ENCODE measurements at regions of chr7 and their contacts with region 1.

Region 1: DNA sequence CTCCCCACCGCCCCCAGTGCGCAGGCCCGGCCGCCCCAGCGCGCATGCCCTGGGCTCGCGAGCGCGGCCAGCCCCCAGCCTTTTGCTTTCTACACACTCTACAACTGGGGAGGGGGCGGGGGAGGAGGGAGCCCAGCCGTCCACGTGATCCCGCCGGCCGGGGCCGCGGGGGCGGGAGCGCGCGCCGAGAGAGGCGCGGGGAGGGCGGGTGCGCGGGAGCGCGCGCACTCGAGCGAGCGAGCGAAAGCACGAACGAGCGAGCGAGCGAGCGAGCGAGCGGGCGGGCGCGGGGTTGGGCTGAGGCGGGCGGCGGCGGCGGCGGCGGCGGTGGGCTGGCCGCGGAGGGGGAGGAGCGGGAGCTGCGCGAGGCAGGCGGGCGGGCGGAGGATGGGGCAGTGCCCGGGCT is at the start of gene AUTS2:
- DNase-seq: peak; percentile 82 to 92 (median 90)
- H3K4me3 ChIP-seq: peak within 1 kb of the TSS; percentile 65 to 97 (median 87)
- H3K27ac ChIP-seq: peak within 1 kb of the TSS; percentile 77 to 99 (median 95)
- H3K27me3 ChIP-seq: no peaks in the 10 kb centered on the region
- CTCF ChIP-seq: peak in 1 of 56 donors; percentile 6
- total RNA-seq, gene AUTS2: 47.2 to 133 (median 80.3) TPM

Region 2: GRCh38 chr7:69109246-69109645 is 488.8 kb before region 1 on chr7:
- intact Hi-C with region 1: no loop called
- DNase-seq: peak in 1 of 10 donors; percentile 60
- H3K4me3 ChIP-seq: no peak overlapping the region
- H3K27ac ChIP-seq: no peak overlapping the region
- H3K27me3 ChIP-seq: peaks cover 0 to 13% (median 0%) of the 10 kb centered on the region in 45 donors
- CTCF ChIP-seq: no peak

Region 3: DNA sequence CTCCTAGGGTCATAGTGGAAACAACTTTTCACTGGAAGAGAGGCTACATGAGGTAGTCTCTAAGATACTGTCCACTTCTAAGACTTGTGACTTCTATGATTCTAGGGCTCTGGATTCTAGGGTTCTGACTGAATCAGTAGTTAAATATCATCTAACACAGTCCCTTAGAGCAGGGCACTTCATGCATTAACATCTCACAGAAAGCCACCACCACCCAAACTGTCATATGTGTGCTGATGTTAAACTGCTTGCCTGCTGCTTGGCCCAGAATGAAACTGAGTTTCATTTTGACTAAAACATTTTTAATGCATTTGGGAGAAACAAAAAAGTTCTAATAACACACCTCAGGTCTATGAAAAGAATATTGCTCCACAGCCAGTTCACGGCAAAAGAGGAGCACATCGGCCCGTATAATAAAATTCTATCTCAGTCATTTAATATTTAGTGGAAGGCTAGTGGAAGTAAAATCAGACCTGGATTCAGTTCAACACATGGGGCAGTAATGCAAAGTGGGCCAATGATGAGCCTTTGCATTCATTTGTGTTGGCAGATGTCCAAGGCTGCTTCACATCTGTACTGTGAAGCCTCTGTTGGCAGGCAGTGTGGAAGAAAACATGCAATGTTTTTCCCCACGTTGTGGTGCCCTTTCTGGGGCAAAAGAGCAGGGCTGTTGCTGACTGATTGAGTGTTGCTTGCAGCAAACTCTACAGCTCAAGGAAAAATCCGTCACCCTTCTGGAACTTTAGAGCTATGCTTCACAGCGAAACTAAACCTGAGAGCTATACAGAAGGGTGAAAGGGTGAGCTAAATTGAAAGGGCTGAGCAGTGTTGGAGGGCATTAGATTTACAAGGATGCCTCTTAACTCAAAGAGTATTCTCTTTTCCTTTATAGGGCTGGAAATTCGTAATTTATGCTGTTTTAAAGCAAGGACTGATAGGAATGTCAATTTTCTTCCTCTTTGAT is 33.3 kb before region 1 on chr7:
- intact Hi-C with region 1: loop called in 1 of 2 experiments (anchors 1 kb)
- DNase-seq: peak in 9 of 10 donors; percentile 27 to 85 (median 63)
- H3K4me3 ChIP-seq: peak overlapping the region in 26 of 59 donors; percentile 0 to 48 (median 16)
- H3K27ac ChIP-seq: peak overlapping the region in 51 of 59 donors; percentile 2 to 92 (median 72)
- H3K27me3 ChIP-seq: peaks cover 0 to 3% (median 0%) of the 10 kb centered on the region in 45 donors
- CTCF ChIP-seq: peak in 20 of 56 donors; percentile 6 to 44 (median 22)

Region 4: GRCh38 chr7:69677054-69677852 is 79.2 kb after region 1 on chr7:
- intact Hi-C with region 1: loop called in 1 of 2 experiments (anchors 10 kb)
- DNase-seq: no peak
- H3K4me3 ChIP-seq: no peak overlapping the region
- H3K27ac ChIP-seq: no peak overlapping the region
- H3K27me3 ChIP-seq: no peaks in the 10 kb centered on the region
- CTCF ChIP-seq: peak in 34 of 56 donors; percentile 7 to 41 (median 22)

Region 5: GRCh38 chr7:69932034-69932628 is 334.0 kb after region 1 on chr7:
- intact Hi-C with region 1: loop called (anchors 5 to 10 kb)
- DNase-seq: peak in 7 of 10 donors; percentile 36 to 69 (median 48)
- H3K4me3 ChIP-seq: no peak overlapping the region
- H3K27ac ChIP-seq: no peak overlapping the region
- H3K27me3 ChIP-seq: no peaks in the 10 kb centered on the region
- CTCF ChIP-seq: peak; percentile 31 to 83 (median 71)

Measured in dorsolateral prefrontal cortex (tissue), 120 donors.